GM18951 (cell line): ENCODE measurements at regions of chr4 and their contacts with region 1.

Region 1: DNA sequence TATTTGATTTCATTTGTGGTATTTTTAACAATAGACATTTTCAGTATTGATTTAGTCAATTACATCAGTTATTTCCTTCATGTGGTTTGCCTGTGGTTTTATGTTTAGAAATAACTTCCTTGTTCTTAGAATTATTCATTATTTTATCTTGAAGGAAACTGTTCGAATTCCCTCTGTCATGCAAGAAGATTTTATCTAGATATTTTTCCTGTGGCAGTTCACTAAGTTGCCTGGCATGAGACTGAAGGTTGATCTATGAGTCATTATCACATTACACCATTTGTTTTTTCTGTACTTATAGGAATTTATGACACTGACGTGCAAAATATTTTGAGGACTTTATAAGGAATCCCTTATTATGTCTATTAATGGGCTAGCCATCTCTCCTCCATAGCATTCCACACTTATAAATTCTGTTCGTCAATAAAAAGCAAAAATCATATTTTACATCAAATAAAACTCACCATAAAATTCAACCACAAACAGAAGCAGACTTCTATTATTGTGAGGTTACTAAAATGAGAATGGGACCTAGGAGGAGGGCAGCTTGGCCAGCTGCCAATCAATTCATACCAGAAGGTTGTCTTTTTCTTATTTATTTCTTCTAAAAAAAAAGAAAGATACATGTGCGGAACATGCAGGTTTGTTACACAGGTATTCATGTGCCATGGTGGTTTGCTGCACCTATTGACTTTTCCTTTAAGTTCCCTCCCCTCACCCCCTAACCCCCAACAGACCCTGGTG is 179.0 kb downstream of the KCNIP4 start:
- POLR2A ChIP-seq: no peak

Region 2: DNA sequence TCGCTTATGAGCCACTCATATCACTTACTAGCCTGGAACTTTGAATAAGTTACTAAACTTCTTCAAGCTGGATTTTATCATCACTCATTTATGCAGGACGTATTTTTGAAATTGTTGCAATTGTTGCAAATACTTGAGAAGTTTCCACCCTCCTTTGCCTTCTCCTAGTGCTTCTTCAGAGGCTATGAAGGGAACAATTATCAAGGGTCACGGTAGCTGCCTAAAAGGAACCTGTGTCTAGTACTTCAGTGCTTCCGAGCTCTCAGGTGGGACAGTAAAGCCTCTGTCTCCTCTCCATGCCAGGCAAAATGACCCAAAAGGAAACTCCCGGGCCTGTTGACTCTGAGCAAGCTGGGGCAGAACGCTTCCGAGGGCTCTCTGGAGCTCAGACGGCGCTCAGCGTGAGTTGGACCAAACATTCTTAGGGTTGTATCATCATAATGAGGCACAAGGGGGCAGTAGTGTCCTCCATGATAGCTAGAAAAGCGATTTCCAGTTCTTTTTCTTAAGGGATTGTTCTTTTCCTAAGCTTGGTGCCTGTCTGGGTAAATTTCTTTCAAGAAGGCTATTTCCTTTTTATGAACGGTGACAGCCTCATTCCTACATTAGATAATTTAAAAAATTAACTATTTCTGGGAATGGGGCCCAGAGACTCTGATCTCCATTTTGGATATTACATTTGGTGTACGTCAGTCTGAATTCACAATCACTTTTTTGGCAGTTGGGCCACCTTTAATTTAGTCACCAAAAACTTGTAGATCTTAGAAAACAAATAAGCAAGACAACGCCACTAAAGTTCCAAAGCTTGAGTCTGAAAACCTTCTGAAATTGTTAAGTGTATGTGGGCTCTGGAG is 996.2 kb before region 1 on chr4:
- in situ Hi-C with region 1: loop called (anchors 10 kb)
- POLR2A ChIP-seq: no peak

Region 3: DNA sequence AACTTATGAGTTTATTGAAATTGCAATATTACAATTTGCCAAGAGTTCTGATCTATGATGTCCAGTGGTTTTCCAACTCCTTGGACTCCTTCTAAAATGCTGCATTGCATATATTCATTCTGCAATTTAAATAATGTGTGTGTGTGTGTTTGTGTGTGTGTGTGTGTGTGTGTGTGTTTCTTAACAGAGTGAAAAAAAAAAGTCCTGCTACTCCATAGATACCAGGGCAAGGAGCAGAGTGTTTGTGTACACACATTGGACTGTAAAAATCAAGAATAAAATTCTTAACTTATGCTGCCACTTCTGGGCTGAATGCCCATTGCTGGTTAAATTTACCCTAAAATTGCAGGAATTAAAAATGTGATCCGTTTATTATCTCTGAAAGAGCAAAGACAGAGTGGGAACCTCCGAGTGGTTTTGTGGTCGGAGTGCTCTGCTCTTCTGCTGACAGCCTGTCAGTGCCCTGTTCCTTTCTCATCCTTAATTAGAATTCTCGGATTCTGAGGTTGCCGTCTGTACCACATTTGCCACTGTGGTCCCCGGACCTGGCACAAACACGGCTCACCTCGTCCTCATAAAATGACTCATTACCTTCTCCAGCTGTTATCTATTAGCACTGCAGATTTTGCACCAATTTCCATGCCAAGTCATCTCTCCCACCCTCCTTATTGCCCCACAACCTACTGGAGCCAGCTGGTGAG is 176.5 kb before region 1 on chr4:
- in situ Hi-C with region 1: no loop called
- POLR2A ChIP-seq: no peak